T-cell (primary cell): ENCODE measurements at regions of chr2 and their contacts with region 1.

Region 1: GRCh38 chr2:85354286-85355072 is at the starts of genes ELMOD3 and RETSAT:
- DNase-seq: peak; percentile 88 to 99 (median 97)
- ATAC-seq: peak; percentile 98 to 100 (median 99)
- H3K4me3 ChIP-seq: peak within 1 kb of the TSS; percentile 74 to 81
- H3K4me3 Mint-ChIP-seq: peak within 1 kb of the TSS; percentile 92 to 100 (median 97)
- H3K27ac ChIP-seq: peak within 1 kb of the TSS; percentile 77
- H3K27ac Mint-ChIP-seq: peak within 1 kb of the TSS; percentile 99
- H3K4me1 ChIP-seq: peaks cover 13 to 29% of the 10 kb centered on the region in 2 experiments
- H3K4me1 Mint-ChIP-seq: peaks cover 54 to 59% (median 59%) of the 10 kb centered on the region in 3 donors
- H3K27me3 ChIP-seq: no peaks in the 10 kb centered on the region
- H3K27me3 Mint-ChIP-seq: no peaks in the 10 kb centered on the region
- total RNA-seq, gene ELMOD3: 18.8 to 30.9 (median 25.2) TPM
- total RNA-seq, gene RETSAT: 24.2 to 36.3 (median 26.5) TPM

Region 2: GRCh38 chr2:85221067-85221691 is 133.3 kb before region 1 on chr2:
- CTCF ChIA-PET with region 1: no interaction called
- POLR2A ChIA-PET with region 1: interaction called in 1 of 2 experiments, 18 read pairs
- DNase-seq: no peak
- ATAC-seq: no peak
- H3K4me3 ChIP-seq: no peak overlapping the region
- H3K4me3 Mint-ChIP-seq: no peak overlapping the region
- H3K27ac ChIP-seq: no peak overlapping the region
- H3K27ac Mint-ChIP-seq: no peak overlapping the region
- H3K4me1 ChIP-seq: no peaks in the 10 kb centered on the region
- H3K4me1 Mint-ChIP-seq: no peaks in the 10 kb centered on the region
- H3K27me3 ChIP-seq: peaks cover 4 to 16% of the 10 kb centered on the region in 2 experiments
- H3K27me3 Mint-ChIP-seq: peaks cover 28 to 36% of the 10 kb centered on the region in 2 donors

Region 3: DNA sequence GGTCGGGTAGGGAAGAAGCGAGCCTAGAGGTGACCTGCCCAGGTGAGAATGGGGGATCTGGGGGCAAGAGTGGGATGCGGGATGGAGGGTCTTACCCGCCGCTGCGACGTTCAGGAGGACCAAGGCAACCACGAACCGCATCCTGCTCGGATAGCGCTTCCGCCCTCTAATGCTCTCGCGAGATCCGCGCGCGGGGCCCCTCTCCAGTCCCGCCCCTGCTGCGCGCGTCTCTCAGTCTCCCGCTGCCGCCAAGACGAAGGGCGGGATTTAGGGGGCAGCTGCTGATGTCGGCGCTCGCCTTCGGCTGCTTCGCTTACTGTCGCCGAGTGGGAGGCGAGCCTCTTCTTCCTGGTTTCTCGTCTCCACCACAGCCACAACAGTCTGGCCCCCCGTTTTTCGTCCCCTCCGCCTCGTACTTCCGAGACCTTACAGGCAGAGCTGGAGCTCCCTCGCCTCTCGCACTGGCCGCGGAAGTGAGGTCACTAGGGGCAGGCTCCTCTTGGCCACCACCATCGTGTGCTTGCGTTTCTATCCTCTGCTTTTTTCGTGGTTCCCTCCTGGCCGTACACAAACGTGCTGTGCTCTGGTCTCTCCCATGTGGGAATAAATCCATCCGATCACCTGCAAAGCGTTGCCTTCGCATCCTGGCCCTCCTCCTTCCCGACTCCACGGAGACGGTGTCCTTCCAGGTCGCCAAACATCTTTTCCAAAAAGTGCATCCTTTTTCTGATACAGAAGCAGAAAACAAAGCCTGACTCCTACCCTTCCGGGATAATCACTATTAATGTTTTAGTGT is 26.5 kb before region 1 on chr2 and contains the start of gene TGOLN2:
- CTCF ChIA-PET with region 1: interaction called, 3 to 4 read pairs
- POLR2A ChIA-PET with region 1: interaction called, 8 to 16 read pairs
- DNase-seq: peak; percentile 89 to 97 (median 94)
- ATAC-seq: peak; percentile 86 to 92 (median 88)
- H3K4me3 ChIP-seq: peak within 1 kb of the TSS; percentile 84 to 95
- H3K4me3 Mint-ChIP-seq: peak within 1 kb of the TSS; percentile 94 to 99 (median 97)
- H3K27ac ChIP-seq: peak within 1 kb of the TSS; percentile 97
- H3K27ac Mint-ChIP-seq: peak within 1 kb of the TSS; percentile 99 to 100
- H3K4me1 ChIP-seq: peaks cover 31 to 35% of the 10 kb centered on the region in 2 experiments
- H3K4me1 Mint-ChIP-seq: peaks cover 33 to 59% (median 42%) of the 10 kb centered on the region in 3 donors
- H3K27me3 ChIP-seq: no peaks in the 10 kb centered on the region
- H3K27me3 Mint-ChIP-seq: no peaks in the 10 kb centered on the region
- total RNA-seq, gene TGOLN2: 142 to 175 (median 161) TPM

Region 4: DNA sequence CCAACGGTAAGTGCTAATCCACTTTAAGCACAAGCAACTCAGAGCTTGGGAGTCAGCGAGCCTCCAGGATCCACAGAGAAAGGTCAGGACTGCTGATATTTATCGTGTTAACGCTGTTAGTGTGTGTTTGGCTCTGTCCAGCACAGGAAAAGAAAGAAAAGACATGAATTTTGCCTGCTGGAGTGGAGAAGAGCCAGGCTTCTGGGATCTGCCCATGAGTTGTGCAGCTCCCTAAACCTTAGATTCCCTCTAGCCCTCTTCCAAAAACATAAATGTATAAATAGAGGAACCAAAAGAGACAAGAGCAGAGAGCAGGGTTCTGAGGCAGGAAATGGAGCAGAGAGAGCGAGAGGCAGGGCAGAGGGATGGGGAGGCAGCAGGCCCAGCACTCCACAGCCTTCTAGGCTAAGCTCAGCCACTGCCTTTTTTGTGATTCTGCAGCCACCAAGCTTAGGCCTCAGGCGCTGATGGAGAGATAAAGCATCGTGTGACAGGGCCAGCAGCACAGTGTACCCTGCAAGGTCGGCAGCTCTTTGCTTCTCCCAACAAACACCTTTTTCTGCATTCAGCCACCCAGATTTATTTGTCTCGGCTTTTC is 170.0 kb after region 1 on chr2:
- CTCF ChIA-PET with region 1: no interaction called
- POLR2A ChIA-PET with region 1: no interaction called
- DNase-seq: no peak
- ATAC-seq: no peak
- H3K4me3 ChIP-seq: no peak overlapping the region
- H3K4me3 Mint-ChIP-seq: no peak overlapping the region
- H3K27ac ChIP-seq: no peak overlapping the region
- H3K27ac Mint-ChIP-seq: no peak overlapping the region
- H3K4me1 ChIP-seq: no peaks in the 10 kb centered on the region
- H3K4me1 Mint-ChIP-seq: no peaks in the 10 kb centered on the region
- H3K27me3 ChIP-seq: peaks cover 0 to 3% of the 10 kb centered on the region in 2 experiments
- H3K27me3 Mint-ChIP-seq: peaks cover 7 to 14% of the 10 kb centered on the region in 2 donors

Region 5: DNA sequence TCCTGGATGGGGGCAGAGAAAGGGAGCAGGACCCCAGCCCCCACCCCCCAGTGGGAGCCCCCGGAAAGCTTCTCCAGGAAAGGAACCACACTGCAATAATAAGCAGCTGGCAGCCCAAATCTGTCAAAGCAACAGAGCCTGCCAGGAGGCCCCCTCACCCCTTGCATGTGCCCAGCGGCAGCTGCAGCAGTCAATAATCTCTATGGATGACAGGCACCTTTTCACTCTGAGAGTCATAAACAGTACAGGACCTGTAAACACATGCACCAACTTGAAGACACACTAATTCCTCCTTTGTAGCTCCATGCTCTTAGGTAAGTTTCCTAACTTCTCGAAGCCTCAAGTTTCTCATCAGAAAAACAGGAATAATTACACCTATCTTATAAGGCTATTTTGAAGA is 1060.5 kb after region 1 on chr2:
- CTCF ChIA-PET with region 1: no interaction called
- POLR2A ChIA-PET with region 1: no interaction called
- DNase-seq: no peak
- ATAC-seq: no peak
- H3K4me3 ChIP-seq: no peak overlapping the region
- H3K4me3 Mint-ChIP-seq: no peak overlapping the region
- H3K27ac ChIP-seq: no peak overlapping the region
- H3K27ac Mint-ChIP-seq: no peak overlapping the region
- H3K4me1 ChIP-seq: peaks cover 0 to 2% of the 10 kb centered on the region in 2 experiments
- H3K4me1 Mint-ChIP-seq: peaks cover 0 to 6% (median 3%) of the 10 kb centered on the region in 3 donors
- H3K27me3 ChIP-seq: peaks cover 0 to 15% of the 10 kb centered on the region in 2 experiments
- H3K27me3 Mint-ChIP-seq: peaks cover 29 to 35% of the 10 kb centered on the region in 2 donors